Vagina (tissue), 2 donors: ENCODE measurements at regions of chr6 and their contacts with region 1.

Region 1: DNA sequence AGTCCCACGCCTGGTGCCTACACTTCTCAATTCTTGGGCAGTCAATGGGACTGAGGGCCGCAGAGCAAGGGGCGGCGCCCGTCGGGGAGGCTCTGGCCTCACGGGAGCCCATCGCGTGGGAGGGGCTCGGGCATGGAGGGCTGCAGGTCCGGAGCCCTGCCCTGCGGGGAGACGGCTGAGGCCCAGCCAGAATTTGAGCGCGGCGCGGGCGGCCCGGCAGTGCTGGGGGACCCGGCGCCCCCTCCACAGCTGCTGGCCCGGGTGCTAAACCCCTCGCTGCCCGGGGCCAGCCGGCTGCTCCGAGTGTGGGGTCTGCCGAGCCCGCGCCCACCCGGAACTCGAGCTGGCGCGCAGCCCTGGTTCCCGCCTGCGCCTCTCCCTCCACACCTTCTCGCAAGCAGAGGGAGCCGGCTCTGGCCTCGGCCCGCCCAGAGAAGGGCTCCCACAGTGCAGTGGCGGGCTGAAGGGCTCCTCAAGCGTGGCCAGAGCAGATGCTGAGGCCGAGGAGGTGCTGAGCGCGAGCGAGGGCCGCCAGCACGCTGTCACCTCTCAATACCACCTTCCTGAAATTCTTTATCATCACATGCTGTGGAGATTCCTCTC is 58.5 kb downstream of the BAK1 start:
- DNase-seq: no peak
- H3K4me3 ChIP-seq: no peak overlapping the region
- H3K27ac ChIP-seq: no peak overlapping the region
- H3K4me1 ChIP-seq: no peaks in the 10 kb centered on the region
- H3K27me3 ChIP-seq: no peaks in the 10 kb centered on the region
- CTCF ChIP-seq: no peak
- POLR2A ChIP-seq: no peak

Region 2: DNA sequence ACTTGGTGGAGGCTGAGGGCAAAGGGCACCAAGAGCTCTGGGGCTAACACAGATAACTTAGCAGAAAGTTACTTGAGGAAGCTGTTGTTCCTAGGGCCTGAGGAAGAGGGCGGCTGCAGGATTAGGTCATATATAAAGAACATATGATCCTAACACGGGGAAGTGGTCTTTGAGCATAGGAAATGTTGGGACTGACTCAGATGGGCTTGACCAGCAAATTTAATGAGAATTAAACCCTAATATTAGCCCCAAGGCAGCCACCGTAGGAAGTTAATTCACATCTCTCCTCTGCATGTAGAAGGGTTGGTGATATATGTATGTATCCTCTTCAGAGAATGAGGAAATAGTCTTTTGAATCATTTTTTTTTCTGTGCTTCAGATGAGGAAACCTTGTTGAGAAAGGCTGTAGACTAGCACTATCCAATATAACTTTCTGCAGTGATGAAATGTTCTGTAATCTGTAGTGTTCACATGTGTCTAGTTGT is 76.4 kb before region 1 on chr6:
- intact Hi-C with region 1: no loop called
- DNase-seq: no peak
- H3K4me3 ChIP-seq: no peak overlapping the region
- H3K27ac ChIP-seq: no peak overlapping the region
- H3K4me1 ChIP-seq: no peaks in the 10 kb centered on the region
- H3K27me3 ChIP-seq: no peaks in the 10 kb centered on the region
- CTCF ChIP-seq: no peak
- POLR2A ChIP-seq: no peak

Region 3: DNA sequence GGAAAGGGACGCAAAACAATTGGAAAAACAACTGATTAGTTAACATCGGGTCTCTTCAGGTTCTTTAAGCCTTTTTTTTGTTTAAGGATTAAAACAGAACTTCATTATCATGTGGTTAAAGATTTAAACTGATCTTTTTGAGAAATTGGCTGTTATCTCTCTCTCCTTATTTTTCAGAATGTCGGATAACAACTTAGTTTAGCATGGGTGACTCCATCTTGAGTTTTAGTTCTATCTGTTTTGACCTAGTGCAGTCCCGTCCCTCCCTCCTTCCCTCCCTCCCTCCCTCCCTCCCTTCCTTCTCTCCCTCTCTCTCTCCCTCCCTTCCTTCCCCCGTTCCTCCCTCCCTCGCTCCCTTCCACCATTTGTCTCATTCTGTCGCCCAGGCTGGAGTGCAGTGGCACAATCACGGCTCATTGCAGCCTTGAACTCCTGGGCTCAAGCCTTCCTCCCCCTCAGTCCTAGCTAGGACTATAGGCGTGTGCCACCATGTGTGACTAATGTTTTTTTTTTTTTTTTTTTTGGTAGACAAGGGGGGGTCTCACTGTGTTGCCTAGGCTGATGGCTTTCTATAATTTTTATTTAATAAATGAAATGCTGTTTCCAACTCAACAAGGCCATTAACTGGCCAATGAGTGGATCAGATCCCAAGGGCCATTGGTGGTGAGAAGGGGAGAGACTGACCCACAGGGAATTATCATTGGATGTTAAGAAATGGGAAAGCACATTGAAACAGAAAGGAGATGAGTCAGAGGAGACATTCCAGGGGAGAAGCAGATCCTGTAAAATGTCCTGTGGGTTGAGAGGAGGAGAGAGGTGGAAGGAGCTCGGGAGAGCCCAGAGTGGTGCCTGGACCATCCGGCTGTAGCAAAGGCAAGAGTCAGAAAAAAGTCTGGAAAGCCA is 44.8 kb after region 1 on chr6:
- intact Hi-C with region 1: loop called (anchors 1 kb)
- DNase-seq: no peak
- H3K4me3 ChIP-seq: no peak overlapping the region
- H3K27ac ChIP-seq: no peak overlapping the region
- H3K4me1 ChIP-seq: peaks cover under 1% of the 10 kb centered on the region
- H3K27me3 ChIP-seq: no peaks in the 10 kb centered on the region
- CTCF ChIP-seq: no peak
- POLR2A ChIP-seq: no peak